ENCODE measurements at regions of chr9 and their contacts with region 1.

Region 1: GRCh38 chr9:78369639-78370219 is 72.8 kb downstream of the PSAT1 start:
- DNase-seq: peak; percentile 37 to 88 (median 82)
- H3K4me3 ChIP-seq: peak overlapping the region in 1 of 59 donors; percentile 31
- H3K27ac ChIP-seq: no peak overlapping the region
- H3K27me3 ChIP-seq: peaks cover 0 to 8% (median 0%) of the 10 kb centered on the region in 45 donors
- CTCF ChIP-seq: peak; percentile 67 to 98 (median 89)

Region 2: GRCh38 chr9:78261403-78262001 is 108.2 kb before region 1 on chr9:
- intact Hi-C with region 1: loop called (anchors 2 to 5 kb)
- DNase-seq: no peak
- H3K4me3 ChIP-seq: no peak overlapping the region
- H3K27ac ChIP-seq: no peak overlapping the region
- H3K27me3 ChIP-seq: no peaks in the 10 kb centered on the region
- CTCF ChIP-seq: peak; percentile 65 to 91 (median 82)

Region 3: GRCh38 chr9:78280982-78281668 is 88.6 kb before region 1 on chr9:
- intact Hi-C with region 1: no loop called
- DNase-seq: no peak
- H3K4me3 ChIP-seq: no peak overlapping the region
- H3K27ac ChIP-seq: peak overlapping the region in 2 of 59 donors; percentile 43 to 59
- H3K27me3 ChIP-seq: no peaks in the 10 kb centered on the region
- CTCF ChIP-seq: no peak

Region 4: GRCh38 chr9:78296893-78297671 is 72.6 kb before region 1 on chr9 and contains the start of gene PSAT1:
- intact Hi-C with region 1: loop called in 1 of 2 experiments (anchors 5 kb)
- DNase-seq: peak; percentile 76 to 97 (median 92)
- H3K4me3 ChIP-seq: peak within 1 kb of the TSS; percentile 57 to 96 (median 84)
- H3K27ac ChIP-seq: peak within 1 kb of the TSS; percentile 65 to 99 (median 94)
- H3K27me3 ChIP-seq: no peaks in the 10 kb centered on the region
- CTCF ChIP-seq: peak in 48 of 56 donors; percentile 12 to 66 (median 34)
- total RNA-seq, gene PSAT1: 61.4 to 222 (median 91.8) TPM

Region 5: GRCh38 chr9:78314953-78315870 is 54.5 kb before region 1 on chr9:
- intact Hi-C with region 1: loop called in 1 of 2 experiments (anchors 5 kb)
- DNase-seq: peak in 3 of 10 donors; percentile 50 to 56 (median 54)
- H3K4me3 ChIP-seq: no peak overlapping the region
- H3K27ac ChIP-seq: peak overlapping the region in 32 of 59 donors; percentile 4 to 67 (median 36)
- H3K27me3 ChIP-seq: no peaks in the 10 kb centered on the region
- CTCF ChIP-seq: no peak

Region 6: DNA sequence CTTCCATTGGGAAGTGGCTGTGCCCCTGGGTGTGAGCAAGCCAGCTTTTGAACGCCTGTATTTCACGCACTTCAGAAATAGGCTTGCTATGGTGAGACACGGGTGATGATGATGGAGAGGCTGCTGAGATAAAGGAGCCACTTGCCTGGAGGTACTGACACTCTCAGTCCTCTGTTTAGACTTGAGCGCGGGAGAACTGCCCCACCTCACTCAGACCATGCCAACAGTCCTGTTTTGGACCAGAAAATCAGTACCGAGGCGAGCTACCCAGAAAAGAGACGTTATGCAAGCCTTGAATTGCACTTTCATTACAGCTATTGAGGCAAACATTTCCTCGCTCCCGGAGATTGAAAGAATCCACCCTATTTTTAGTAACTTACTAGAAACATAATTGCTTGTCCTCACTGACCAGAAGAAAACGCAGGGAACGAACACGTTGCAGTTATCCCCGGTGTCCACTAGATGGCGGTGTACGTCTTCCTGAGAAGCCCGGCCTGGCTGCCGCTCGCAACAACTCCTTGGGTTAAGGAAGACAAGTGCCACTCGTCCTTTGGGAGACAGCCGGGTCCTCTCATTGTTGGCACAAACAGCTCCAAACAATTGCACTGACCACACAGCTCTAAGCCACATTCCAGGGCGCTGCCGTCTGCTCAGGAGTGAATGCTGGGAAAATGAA is 69.6 kb after region 1 on chr9:
- intact Hi-C with region 1: loop called in 1 of 2 experiments (anchors 2 kb)
- DNase-seq: peak; percentile 75 to 94 (median 87)
- H3K4me3 ChIP-seq: peak overlapping the region in 55 of 59 donors; percentile 5 to 66 (median 37)
- H3K27ac ChIP-seq: peak overlapping the region in 45 of 59 donors; percentile 5 to 87 (median 55)
- H3K27me3 ChIP-seq: no peaks in the 10 kb centered on the region
- CTCF ChIP-seq: peak; percentile 81 to 98 (median 93)